T-cell (primary cell): ENCODE measurements at regions of chr2 and their contacts with region 1.

Region 1: GRCh38 chr2:231452799-231453508 is 11.3 kb downstream of the NCL start:
- DNase-seq: no peak
- ATAC-seq: peak in 1 of 4 experiments; percentile 11
- H3K4me3 ChIP-seq: no peak overlapping the region
- H3K4me3 Mint-ChIP-seq: no peak overlapping the region
- H3K27ac ChIP-seq: no peak overlapping the region
- H3K27ac Mint-ChIP-seq: peak overlapping the region in 1 of 2 donors; percentile 34
- H3K4me1 ChIP-seq: peaks cover 0 to 5% of the 10 kb centered on the region in 2 experiments
- H3K4me1 Mint-ChIP-seq: peaks cover 13 to 19% (median 17%) of the 10 kb centered on the region in 3 donors
- H3K27me3 ChIP-seq: no peaks in the 10 kb centered on the region
- H3K27me3 Mint-ChIP-seq: no peaks in the 10 kb centered on the region

Region 2: DNA sequence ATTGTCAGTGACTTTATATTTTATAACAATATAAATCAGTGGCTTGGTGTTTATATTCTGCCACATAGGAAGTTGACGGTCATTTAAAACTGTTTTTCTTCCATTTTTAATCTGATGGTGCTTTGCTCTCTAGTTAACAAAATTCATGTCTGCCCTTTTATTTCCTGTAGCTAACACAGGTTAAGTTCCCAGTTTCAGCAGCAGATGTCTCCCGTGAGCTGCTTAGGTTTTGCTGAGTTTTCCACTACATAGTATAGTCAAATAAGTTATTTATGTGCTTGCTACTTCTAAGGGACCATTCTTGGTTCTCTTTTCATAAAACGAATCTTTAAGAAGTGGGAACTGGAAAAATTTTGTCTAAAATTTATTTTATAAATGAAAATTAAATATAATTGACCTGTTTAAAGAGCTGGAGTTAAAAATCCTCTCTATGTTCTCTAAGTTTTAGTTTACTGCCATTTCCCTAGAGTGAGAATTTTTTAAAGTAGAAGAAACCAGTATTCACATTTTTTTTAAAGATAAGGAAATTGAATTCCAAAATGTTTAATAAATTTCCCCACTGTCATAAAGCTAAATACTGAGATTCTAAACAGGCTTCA is 348.7 kb before region 1 on chr2:
- CTCF ChIA-PET with region 1: interaction called, 3 to 67 read pairs
- POLR2A ChIA-PET with region 1: interaction called, 4 to 5 read pairs
- DNase-seq: peak in 34 of 35 experiments; percentile 6 to 72 (median 42)
- ATAC-seq: peak; percentile 65 to 77 (median 72)
- H3K4me3 ChIP-seq: no peak overlapping the region
- H3K4me3 Mint-ChIP-seq: no peak overlapping the region
- H3K27ac ChIP-seq: no peak overlapping the region
- H3K27ac Mint-ChIP-seq: no peak overlapping the region
- H3K4me1 ChIP-seq: no peaks in the 10 kb centered on the region
- H3K4me1 Mint-ChIP-seq: peaks cover 0 to 4% (median 2%) of the 10 kb centered on the region in 3 donors
- H3K27me3 ChIP-seq: no peaks in the 10 kb centered on the region
- H3K27me3 Mint-ChIP-seq: no peaks in the 10 kb centered on the region

Region 3: DNA sequence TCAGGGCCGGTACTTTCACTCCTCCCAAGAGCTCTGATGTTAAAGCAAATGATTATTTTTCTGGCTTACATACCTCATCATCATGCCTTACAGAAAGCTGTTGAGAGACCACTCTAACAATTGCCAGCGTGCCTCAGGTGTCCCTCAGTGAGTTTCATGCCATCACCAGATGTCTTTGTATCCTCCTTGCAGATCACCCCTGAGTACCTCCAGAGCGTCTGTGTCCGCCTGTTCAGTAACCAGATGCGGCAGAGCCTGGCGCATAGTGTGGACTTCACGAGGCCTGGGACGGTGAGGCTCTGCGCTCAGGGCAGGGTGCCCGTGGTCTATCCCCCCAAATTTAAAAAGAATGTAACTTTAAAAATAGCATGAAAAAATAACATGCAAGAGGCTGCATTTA is 213.2 kb before region 1 on chr2:
- CTCF ChIA-PET with region 1: interaction called in 1 of 2 experiments, 11 read pairs
- POLR2A ChIA-PET with region 1: no interaction called
- DNase-seq: no peak
- ATAC-seq: no peak
- H3K4me3 ChIP-seq: no peak overlapping the region
- H3K4me3 Mint-ChIP-seq: no peak overlapping the region
- H3K27ac ChIP-seq: no peak overlapping the region
- H3K27ac Mint-ChIP-seq: no peak overlapping the region
- H3K4me1 ChIP-seq: no peaks in the 10 kb centered on the region
- H3K4me1 Mint-ChIP-seq: no peaks in the 10 kb centered on the region
- H3K27me3 ChIP-seq: peaks cover 0 to 2% of the 10 kb centered on the region in 2 experiments
- H3K27me3 Mint-ChIP-seq: no peaks in the 10 kb centered on the region

Region 4: DNA sequence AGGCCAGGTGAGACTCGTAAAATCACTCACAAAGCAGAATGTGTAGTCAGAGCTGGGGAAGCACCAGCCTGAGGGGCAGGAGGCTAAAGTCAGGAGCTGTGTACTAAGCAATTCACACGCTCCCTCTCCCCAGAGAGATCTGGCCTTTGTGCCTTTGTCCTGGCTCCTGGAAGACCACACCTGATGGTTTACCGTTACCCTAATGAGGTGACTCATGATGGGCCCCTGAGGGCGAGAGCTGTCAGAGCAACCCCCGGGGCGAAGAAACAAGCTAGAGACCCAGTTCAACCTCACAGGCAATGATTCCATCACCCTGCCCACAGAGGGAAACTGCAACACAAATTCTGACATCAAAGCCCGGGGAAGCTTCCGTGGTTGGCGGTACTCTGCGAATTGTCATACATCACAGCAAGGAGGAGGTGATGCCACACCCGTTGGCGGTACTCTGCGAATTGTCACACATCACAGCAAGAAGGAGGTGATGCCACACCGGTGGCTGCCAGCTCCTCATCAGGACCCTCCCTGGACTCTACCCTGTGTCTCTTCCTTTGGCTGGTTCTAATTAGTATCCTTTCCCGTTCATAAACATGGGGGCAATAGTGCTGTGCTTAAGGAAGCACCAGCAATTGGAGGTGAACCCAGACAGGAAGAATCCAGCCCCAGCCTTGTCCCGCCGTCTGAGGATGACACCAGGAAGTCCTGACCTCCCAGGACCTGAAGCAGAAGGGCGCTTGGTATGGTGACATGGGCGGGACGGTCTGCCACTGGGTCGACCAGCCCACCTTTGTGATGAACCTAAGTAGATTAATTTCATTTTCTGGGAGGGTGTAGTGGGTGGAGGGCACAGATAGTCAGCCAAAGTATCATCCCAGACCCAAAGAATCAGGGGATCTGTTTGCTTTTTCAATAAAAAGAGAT is 26.9 kb before region 1 on chr2:
- CTCF ChIA-PET with region 1: interaction called in 1 of 2 experiments, 14 read pairs
- POLR2A ChIA-PET with region 1: interaction called in 1 of 2 experiments, 4 read pairs
- DNase-seq: peak in 33 of 35 experiments; percentile 14 to 87 (median 71)
- ATAC-seq: peak; percentile 54 to 91 (median 77)
- H3K4me3 ChIP-seq: peak overlapping the region in 1 of 2 donors; percentile 3
- H3K4me3 Mint-ChIP-seq: peak overlapping the region in 2 of 3 donors; percentile 31 to 41
- H3K27ac ChIP-seq: peak overlapping the region; percentile 75
- H3K27ac Mint-ChIP-seq: peak overlapping the region in 1 of 2 donors; percentile 79
- H3K4me1 ChIP-seq: peaks cover 0 to 24% of the 10 kb centered on the region in 2 experiments
- H3K4me1 Mint-ChIP-seq: peaks cover 0 to 17% (median 9%) of the 10 kb centered on the region in 3 donors
- H3K27me3 ChIP-seq: no peaks in the 10 kb centered on the region
- H3K27me3 Mint-ChIP-seq: peaks cover 0 to 2% of the 10 kb centered on the region in 2 donors

Region 5: DNA sequence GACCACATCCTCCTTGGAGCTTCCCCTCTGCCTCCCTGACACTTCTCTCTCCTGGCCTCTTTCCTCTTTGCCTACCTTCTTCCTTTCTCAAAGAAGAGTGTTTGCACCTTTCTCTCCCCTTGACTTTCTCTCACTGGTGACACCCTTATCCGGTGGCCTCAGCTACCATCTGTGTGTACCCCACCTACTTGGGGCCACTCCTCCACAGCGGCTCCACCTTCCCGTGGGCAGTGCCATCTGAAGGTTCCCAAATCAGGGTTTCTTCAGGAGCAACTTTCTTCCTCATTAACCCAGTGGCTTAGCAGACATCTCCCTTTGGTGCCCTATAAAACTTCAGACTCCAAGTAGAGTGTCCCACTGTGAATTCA is 16.6 kb after region 1 on chr2:
- CTCF ChIA-PET with region 1: interaction called, 12 to 36 read pairs
- POLR2A ChIA-PET with region 1: interaction called, 6 to 24 read pairs
- DNase-seq: no peak
- ATAC-seq: no peak
- H3K4me3 ChIP-seq: no peak overlapping the region
- H3K4me3 Mint-ChIP-seq: no peak overlapping the region
- H3K27ac ChIP-seq: no peak overlapping the region
- H3K27ac Mint-ChIP-seq: peak overlapping the region; percentile 8 to 54
- H3K4me1 ChIP-seq: peaks cover 5 to 16% of the 10 kb centered on the region in 2 experiments
- H3K4me1 Mint-ChIP-seq: peaks cover 0 to 27% (median 5%) of the 10 kb centered on the region in 3 donors
- H3K27me3 ChIP-seq: peaks cover 0 to 6% of the 10 kb centered on the region in 2 experiments
- H3K27me3 Mint-ChIP-seq: peaks cover 0 to 3% of the 10 kb centered on the region in 2 donors